ENCODE measurements at regions of chr15 and their contacts with region 1.

Region 1: DNA sequence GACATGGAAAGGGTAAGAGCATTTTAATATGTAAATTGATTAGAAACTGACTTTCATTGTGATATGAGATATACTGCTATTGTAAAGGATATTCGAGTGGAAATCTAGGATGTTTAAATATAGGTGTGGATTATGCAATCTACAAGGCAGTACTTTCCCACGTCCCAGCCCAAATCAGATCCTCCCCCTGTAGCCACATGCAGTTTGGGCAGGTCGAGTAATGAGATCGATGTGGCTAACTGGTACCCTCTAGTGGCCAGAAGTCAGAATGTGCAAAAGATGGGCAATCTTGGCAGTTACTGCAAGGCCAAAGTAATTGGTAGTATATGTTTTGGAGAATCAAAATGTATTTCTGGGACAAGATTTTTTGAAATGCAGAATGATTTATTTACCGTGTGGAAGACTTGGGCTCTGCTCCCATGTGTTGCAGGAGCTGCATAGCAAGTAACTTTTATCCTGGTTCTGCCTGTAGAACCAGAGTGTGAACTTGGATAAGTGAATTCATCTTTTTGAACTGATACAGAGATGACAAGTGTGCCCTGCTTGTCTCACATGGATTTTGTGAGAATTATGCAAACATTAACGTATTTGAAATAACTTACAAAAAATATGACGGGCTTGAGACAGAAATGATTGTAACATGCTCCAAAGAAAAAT is 94.5 kb upstream of the ADAMTSL3 start:
- DNase-seq: peak in 5 of 9 experiments; percentile 22 to 54 (median 33)
- ATAC-seq: peak; percentile 42
- H3K4me3 ChIP-seq: no peak overlapping the region
- H3K4me3 Mint-ChIP-seq: no peak overlapping the region
- H3K27ac ChIP-seq: no peak overlapping the region
- H3K27ac Mint-ChIP-seq: no peak overlapping the region
- H3K4me1 ChIP-seq: no peaks in the 10 kb centered on the region
- H3K4me1 Mint-ChIP-seq: no peaks in the 10 kb centered on the region
- H3K27me3 ChIP-seq: no peaks in the 10 kb centered on the region
- H3K27me3 Mint-ChIP-seq: peaks cover 9% of the 10 kb centered on the region
- CTCF ChIP-seq: peak; percentile 69

Region 2: GRCh38 chr15:83248151-83249029 is 311.0 kb before region 1 on chr15:
- CTCF ChIA-PET with region 1: interaction called, 8 read pairs
- POLR2A ChIA-PET with region 1: no interaction called
- intact Hi-C with region 1: loop called in 1 of 2 experiments (anchors 2 kb)
- DNase-seq: peak in 6 of 9 experiments; percentile 2 to 60 (median 10)
- ATAC-seq: no peak
- H3K4me3 ChIP-seq: no peak overlapping the region
- H3K4me3 Mint-ChIP-seq: no peak overlapping the region
- H3K27ac ChIP-seq: no peak overlapping the region
- H3K27ac Mint-ChIP-seq: no peak overlapping the region
- H3K4me1 ChIP-seq: no peaks in the 10 kb centered on the region
- H3K4me1 Mint-ChIP-seq: no peaks in the 10 kb centered on the region
- H3K27me3 ChIP-seq: peaks cover 3 to 4% of the 10 kb centered on the region in 2 experiments
- H3K27me3 Mint-ChIP-seq: peaks cover 45% of the 10 kb centered on the region
- CTCF ChIP-seq: peak; percentile 95

Region 3: GRCh38 chr15:83436458-83437158 is 122.8 kb before region 1 on chr15:
- CTCF ChIA-PET with region 1: interaction called, 4 read pairs
- POLR2A ChIA-PET with region 1: no interaction called
- intact Hi-C with region 1: loop called (anchors 1 to 2 kb)
- DNase-seq: no peak
- ATAC-seq: no peak
- H3K4me3 ChIP-seq: no peak overlapping the region
- H3K4me3 Mint-ChIP-seq: no peak overlapping the region
- H3K27ac ChIP-seq: no peak overlapping the region
- H3K27ac Mint-ChIP-seq: no peak overlapping the region
- H3K4me1 ChIP-seq: no peaks in the 10 kb centered on the region
- H3K4me1 Mint-ChIP-seq: no peaks in the 10 kb centered on the region
- H3K27me3 ChIP-seq: no peaks in the 10 kb centered on the region
- H3K27me3 Mint-ChIP-seq: peaks cover 18% of the 10 kb centered on the region
- CTCF ChIP-seq: no peak

Region 4: DNA sequence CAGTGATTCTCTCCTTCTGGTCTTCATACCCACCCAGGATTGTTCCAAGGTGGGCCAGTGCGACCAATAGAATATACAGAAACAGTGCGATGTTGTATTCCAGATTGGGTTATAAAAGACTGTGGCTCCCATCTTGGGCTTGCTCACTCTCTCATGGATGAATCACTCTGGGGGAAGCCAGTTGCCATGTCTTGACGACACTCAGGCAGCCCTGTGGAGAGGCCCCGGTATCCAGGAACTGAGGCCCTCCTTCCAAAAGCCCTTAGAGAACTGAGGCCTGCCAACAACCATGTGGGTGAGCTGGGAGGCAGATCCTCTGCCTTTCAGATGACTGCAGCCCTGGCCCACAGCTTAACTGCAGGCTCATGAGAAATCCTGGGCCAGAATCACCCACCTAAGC is 55.1 kb before region 1 on chr15:
- CTCF ChIA-PET with region 1: no interaction called
- POLR2A ChIA-PET with region 1: no interaction called
- intact Hi-C with region 1: no loop called
- DNase-seq: no peak
- ATAC-seq: no peak
- H3K4me3 ChIP-seq: no peak overlapping the region
- H3K4me3 Mint-ChIP-seq: no peak overlapping the region
- H3K27ac ChIP-seq: no peak overlapping the region
- H3K27ac Mint-ChIP-seq: no peak overlapping the region
- H3K4me1 ChIP-seq: no peaks in the 10 kb centered on the region
- H3K4me1 Mint-ChIP-seq: no peaks in the 10 kb centered on the region
- H3K27me3 ChIP-seq: no peaks in the 10 kb centered on the region
- H3K27me3 Mint-ChIP-seq: no peaks in the 10 kb centered on the region
- CTCF ChIP-seq: no peak